Posterior cingulate gyrus (tissue), 11 donors: ENCODE measurements at regions of chr14 and their contacts with region 1.

Region 1: DNA sequence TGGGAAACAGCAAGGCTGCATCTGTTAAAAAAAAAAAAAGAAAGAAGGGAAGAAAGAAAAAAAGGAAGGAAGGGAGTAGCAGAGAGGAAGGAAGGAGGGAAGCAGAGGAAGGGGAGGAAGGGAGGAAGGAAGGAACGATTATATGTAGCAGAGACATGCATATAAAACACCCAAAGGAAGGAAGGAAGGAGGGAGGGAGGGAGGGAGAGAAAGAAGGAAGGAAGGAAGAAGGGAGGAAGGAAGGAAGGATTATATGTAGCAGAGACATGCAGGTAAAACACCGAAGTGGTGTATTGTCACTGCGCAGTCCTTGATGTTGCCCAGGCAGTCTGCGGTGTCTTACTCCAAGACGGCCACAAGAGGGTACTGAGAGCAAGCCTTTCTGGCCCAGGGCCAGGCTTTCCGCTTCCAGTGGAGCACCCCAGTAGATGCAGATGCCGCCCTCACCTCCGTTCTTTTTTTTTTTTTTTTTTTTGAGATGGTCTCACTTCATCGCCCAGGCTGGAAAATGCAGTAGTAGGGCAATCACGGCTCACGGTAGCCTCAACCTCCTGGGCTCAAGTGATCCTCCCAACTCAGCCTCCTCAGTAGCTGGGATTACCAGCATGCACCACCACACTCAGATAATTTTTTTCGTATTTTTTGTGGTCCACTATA is 5.8 kb upstream of the LBHD2 start:
- DNase-seq: peak; percentile 40 to 96 (median 78)

Region 2: DNA sequence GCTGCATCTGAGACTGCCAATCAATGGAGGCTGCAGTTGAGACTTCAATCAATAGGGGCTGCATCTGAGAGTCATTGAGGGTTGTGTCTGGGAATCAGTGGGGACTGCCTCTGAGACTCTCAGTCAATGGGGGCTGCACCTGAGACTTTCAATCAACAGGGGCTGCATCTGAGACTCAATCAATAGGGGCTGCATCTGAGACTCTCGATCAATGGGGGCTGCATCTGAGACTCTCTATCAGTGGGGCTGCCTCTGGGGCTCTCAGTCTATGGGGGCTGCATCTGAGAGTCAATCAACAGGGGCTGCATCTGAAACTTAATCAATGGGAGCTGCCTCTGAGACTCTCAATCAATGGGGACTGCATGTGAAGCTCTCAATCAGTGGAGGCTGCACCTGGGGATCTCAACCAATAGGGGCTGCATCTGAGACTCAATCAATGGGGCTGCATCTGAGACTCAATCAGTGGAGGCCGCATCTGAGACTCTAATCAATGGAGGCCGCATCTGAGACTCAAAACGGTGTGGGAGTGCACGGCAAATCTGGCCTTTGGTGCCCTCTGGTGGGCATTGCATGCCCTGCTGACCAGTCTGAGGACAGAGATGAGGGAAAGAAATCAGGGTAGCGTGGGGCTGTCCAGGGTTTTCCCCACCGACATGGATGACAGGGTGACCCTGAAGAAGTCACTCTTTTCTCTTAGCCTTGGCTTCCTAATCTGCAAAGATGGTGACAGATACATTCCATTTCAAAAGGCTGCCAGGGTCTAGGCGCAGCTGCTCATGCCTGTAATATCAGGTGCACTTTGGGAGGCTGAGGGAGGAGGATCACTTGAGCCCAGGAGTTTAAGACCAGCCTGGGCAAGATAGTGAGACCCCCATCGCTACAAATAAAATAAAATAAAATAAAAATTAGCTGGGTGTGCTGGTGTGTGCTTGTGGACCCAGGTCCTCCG is 214.5 kb after region 1 on chr14:
- intact Hi-C with region 1: loop called (anchors 2 kb)
- DNase-seq: peak; percentile 62 to 96 (median 87)